Activated CD4-positive, alpha-beta T cell treated with anti-CD3 and anti-CD28 coated beads, Interleukin-2, amount 10 ng/mL, durations not matched to agents 24 days and 14 days (primary cell): ENCODE measurements at regions of chr14 and their contacts with region 1.

Region 1: GRCh38 chr14:50342221-50343078 is 30.3 kb downstream of the DMAC2L start:
- DNase-seq: peak; percentile 77
- H3K4me3 Mint-ChIP-seq: no peak overlapping the region
- H3K27ac Mint-ChIP-seq: peak overlapping the region; percentile 23
- H3K4me1 Mint-ChIP-seq: peaks cover 24% of the 10 kb centered on the region
- H3K27me3 Mint-ChIP-seq: peaks cover 14% of the 10 kb centered on the region

Region 2: GRCh38 chr14:50038398-50039119 is 303.9 kb before region 1 on chr14:
- intact Hi-C with region 1: no loop called
- DNase-seq: peak; percentile 87
- H3K4me3 Mint-ChIP-seq: peak overlapping the region; percentile 81
- H3K27ac Mint-ChIP-seq: peak overlapping the region; percentile 98
- H3K4me1 Mint-ChIP-seq: peaks cover 58% of the 10 kb centered on the region
- H3K27me3 Mint-ChIP-seq: no peaks in the 10 kb centered on the region

Region 3: GRCh38 chr14:50363714-50364111 is 21.3 kb after region 1 on chr14:
- intact Hi-C with region 1: loop called (anchors 1 kb)
- DNase-seq: peak; percentile 89
- H3K4me3 Mint-ChIP-seq: peak overlapping the region; percentile 86
- H3K27ac Mint-ChIP-seq: peak overlapping the region; percentile 93
- H3K4me1 Mint-ChIP-seq: peaks cover 22% of the 10 kb centered on the region
- H3K27me3 Mint-ChIP-seq: no peaks in the 10 kb centered on the region

Region 4: DNA sequence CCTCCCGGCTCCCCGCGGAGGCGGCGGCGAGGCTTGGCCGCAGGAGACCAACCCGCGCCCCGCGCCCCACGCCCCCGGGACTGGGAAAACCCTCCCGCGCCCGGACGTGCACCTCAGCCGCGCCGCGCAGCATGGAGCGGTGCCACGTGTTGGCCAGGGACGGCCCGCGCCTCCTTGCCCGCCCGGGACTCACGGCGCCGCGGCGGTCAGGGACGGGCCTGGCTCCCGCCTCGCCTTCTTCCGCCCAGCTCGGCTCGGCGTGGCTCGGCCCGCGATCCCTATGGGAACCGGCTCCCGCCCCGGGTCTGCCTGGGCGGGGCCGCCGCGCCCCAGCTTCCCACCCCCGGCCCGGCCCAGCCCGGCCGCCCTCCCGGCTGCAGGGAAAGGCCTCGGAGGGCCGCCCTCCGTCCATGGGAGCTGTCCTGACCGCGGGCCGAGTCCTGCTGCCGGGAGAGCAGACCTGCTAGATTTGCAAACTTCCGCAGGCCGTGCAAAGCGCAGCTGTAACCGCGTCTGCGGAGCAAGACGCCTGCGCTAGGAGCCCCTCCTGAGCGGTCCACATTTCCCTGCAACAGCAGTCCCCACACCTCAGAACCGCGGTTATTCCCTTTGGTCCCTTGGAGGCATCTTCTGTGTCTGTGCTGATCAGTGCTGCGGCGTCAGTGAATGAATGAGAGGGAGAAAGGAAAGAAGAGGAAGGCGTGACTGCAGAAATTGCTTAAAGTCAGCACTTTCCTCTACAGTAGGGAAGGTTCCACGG is 54.4 kb after region 1 on chr14 and contains the start of gene CDKL1:
- intact Hi-C with region 1: loop called (anchors 1 kb)
- DNase-seq: peak; percentile 84
- H3K4me3 Mint-ChIP-seq: peak within 1 kb of the TSS; percentile 88
- H3K27ac Mint-ChIP-seq: peak within 1 kb of the TSS; percentile 88
- H3K4me1 Mint-ChIP-seq: peaks cover 16% of the 10 kb centered on the region
- H3K27me3 Mint-ChIP-seq: peaks cover 20% of the 10 kb centered on the region
- total RNA-seq, gene CDKL1: 4.8 and 5.7 TPM in 2 replicates

Region 5: DNA sequence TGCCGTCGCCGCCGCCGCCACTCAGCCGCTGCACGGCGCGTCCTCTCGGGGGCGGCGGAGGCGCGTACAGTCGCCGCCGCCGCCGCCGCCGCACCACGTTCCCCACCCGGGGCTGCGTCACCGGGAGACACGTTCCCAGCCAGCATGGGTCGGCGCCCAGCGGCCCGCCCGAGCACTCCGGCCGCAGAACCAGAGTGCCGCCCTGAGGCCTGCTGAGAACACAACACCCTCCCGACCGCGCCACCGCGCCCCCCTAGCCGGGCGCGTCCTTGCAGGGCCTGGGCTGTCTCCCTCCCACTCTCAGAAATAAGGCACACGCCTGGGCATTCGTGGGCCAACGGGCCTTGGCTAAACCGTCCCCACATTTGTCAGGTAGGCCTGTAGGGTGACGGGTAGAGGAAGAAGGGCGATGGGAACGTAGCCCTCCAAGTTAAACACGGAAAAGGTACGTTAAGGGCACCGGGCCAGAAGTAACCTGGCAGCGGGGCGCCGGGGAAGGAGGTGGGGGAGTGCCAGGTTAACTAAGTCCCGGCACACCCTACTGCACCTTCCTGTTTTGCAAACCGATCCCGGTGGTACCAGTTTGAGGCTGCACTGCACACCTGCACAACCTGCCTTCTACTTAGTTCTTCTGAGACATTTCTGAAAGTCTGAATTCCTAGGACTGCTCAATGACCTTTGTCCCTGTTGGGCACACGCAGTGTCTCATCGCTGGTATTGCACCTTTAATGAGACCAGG is 190.2 kb after region 1 on chr14 and contains the start of gene MAP4K5:
- intact Hi-C with region 1: loop called (anchors 1 kb)
- DNase-seq: peak; percentile 96
- H3K4me3 Mint-ChIP-seq: peak within 1 kb of the TSS; percentile 89
- H3K27ac Mint-ChIP-seq: peak within 1 kb of the TSS; percentile 75
- H3K4me1 Mint-ChIP-seq: peaks cover 38% of the 10 kb centered on the region
- H3K27me3 Mint-ChIP-seq: peaks cover 17% of the 10 kb centered on the region
- total RNA-seq, gene MAP4K5: 24.3 and 24.6 TPM in 2 replicates

Region 6: GRCh38 chr14:50875359-50876070 is 533.1 kb after region 1 on chr14:
- intact Hi-C with region 1: loop called (anchors 5 kb)
- DNase-seq: peak; percentile 89
- H3K4me3 Mint-ChIP-seq: peak overlapping the region; percentile 20
- H3K27ac Mint-ChIP-seq: no peak overlapping the region
- H3K4me1 Mint-ChIP-seq: peaks cover 20% of the 10 kb centered on the region
- H3K27me3 Mint-ChIP-seq: peaks cover 82% of the 10 kb centered on the region